ENCODE measurements at regions of chr16 and their contacts with region 1.

Region 1: DNA sequence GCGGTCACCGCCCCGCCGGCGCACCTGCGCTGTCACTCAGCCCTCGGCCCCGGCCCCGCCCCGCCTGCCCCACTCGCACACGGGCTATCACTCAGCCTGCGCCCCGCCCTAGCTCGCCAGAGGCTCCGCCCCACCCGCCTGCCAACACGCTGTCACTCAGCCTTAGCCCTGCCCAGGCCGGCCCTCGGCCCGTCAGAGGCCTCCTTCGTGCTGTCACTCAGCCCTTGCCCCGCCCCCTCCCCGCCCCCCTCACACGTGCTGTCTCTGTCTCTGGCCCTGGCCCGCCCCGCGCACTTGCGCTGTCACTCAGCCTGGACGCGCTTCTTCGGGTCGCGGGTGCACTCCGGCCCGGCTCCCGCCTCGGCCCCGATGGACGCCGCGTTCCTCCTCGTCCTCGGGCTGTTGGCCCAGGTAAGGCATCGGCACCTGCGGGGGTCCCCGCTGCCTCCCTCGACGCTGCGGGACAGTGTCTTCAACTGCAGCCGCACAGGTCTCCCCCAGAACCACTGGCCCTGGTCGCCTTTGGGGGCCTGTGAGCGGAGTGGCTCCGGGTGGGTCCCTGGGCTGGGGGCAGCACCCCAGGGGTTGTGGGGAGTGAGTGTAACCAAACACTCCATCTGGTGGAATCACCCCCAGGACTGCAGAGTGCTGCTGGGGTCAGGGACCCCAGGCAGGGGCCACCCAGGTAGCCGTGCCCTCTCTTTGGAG is at the start of gene CDH15:
- DNase-seq: peak; percentile 97
- H3K4me3 ChIP-seq: peak within 1 kb of the TSS; percentile 34
- H3K27ac ChIP-seq: no peak within 1 kb of the TSS
- H3K4me1 ChIP-seq: peaks cover 25% of the 10 kb centered on the region
- CTCF ChIP-seq: no peak
- total RNA-seq, gene CDH15: not detected in 2 replicates

Region 2: DNA sequence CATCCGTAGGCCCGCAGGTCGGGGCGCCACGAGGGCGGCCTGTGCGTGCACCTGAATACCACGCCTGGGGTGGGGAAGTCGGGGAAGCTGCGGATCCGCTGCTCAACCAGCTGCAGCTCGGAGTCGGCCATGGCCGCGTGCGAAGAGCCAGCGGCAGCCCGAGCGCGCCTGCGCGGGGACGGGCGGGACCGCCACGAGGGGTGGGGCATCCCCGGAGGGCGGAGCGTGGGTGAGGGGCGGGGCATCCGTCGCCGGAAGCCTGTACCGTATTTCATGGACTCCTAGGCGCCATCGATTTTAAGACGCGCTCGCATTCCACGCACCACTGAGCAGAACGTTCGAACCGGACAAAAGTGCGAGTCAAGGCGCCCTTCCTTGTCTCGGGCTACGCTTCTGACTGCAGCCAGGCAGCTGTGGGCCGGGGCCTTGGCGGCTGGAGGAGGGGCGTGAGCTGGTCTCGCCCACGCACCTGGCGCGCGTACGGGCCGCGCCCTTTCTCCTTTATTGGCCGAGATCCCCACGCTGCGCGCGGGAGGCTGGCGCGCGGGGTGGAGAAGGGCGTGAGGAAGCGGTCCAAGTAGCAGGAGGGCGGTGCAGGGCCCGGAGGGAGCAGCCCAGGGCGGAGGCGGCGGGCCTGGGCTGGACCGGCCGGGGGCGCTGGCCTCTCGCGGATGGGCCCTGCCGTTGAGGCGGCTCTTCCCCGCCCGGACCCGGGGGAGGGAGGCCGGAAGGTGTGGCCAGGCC is 359.7 kb before region 1 on chr16 and contains the start of gene APRT:
- CTCF ChIA-PET with region 1: interaction called, 3 read pairs
- POLR2A ChIA-PET with region 1: no interaction called
- intact Hi-C with region 1: loop called (anchors 1 kb)
- DNase-seq: peak; percentile 93
- H3K4me3 ChIP-seq: peak within 1 kb of the TSS; percentile 75
- H3K27ac ChIP-seq: peak within 1 kb of the TSS; percentile 76
- H3K4me1 ChIP-seq: peaks cover 24% of the 10 kb centered on the region
- CTCF ChIP-seq: no peak
- total RNA-seq, gene APRT: 168 and 216 TPM in 2 replicates

Region 3: DNA sequence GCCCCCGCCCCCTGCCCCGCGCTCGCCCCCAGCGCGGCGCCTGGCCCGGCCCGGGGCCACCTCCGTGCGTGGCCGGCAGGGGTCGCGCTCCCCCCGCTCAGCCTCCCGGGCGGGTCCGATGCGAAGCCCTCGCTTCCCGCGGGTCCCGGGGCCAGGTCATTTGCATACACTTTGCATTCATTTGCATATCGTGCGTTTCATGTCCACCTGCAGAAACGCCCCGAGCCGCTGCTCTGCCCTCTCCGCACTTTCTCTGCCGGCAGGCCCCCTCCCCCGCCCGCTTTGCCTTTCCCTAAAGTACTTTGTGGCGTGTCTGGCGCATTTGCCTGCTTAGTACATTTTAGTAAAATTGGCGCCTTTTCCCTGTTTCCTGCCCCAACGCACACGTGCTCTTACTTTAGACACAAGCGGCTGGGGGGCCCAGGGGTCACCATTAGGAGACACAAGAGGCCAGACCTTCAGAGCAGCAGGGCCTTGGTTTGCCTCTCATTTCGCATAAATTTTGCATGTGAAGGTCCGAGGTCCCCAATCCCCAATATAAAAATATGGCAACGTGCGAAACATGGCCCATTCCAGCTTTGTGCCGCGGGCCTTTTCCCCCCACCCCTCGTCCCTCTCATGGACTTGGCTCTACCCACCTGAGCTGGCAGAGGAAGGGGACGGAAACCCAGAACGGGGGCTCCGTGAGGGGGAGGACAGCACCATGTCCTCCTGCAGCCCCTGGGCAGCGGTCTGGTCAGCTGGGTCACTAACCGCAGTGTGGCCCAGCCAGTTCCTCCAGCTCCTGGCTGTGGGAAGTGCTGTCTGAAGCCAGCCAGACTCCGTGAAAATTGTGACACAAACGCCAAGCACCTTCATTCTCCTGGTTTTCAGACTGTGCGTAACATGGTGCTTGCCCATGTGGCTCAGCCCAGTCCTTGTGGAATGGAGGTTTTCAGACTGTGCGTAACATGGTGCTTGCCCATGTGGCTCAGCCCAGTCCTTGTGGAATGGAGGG is 229.4 kb before region 1 on chr16:
- CTCF ChIA-PET with region 1: no interaction called
- POLR2A ChIA-PET with region 1: no interaction called
- intact Hi-C with region 1: loop called (anchors 1 kb)
- DNase-seq: peak; percentile 84
- H3K4me3 ChIP-seq: peak overlapping the region; percentile 47
- H3K27ac ChIP-seq: peak overlapping the region; percentile 2
- H3K4me1 ChIP-seq: peaks cover 49% of the 10 kb centered on the region
- CTCF ChIP-seq: peak; percentile 63

Region 4: DNA sequence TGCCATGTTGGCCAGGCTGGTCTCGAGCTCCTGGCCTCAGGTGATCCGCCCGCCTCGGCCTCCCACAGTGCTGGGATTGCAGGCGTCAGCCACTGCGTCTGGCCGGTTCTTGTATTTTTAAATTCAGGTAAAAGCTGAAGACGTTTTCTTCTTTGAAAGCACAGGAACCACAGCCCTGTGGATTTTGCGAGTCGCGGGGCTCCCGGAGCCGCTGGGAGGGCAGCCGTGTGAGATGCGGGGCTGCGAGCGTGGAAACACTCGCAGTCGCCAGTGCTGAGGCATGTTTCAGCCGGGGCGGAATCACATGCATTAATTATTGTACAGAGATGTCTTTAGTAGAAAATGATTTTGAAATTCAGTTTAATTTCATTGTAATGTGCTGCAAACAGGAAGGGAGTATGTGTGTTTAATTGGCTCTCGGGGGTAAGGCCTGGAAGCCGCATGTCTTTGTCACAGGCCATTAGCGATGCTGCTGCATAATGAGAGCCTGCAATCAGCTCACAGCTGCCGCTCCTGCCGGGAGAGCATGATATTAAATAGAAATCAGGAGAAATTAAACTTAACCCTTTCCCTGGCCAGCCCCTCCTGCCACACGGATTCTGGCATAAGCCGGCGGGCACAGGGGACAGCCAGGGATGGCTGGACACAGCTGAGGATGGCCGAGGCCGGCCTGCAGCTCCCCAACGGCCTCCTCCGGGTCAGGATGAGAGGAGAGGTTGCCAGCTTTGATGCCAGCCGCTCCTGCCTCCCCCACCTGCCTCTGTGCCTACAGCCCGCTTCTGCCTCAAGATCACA is 35.4 kb before region 1 on chr16:
- CTCF ChIA-PET with region 1: no interaction called
- POLR2A ChIA-PET with region 1: no interaction called
- intact Hi-C with region 1: no loop called
- DNase-seq: no peak
- H3K4me3 ChIP-seq: no peak overlapping the region
- H3K27ac ChIP-seq: no peak overlapping the region
- H3K4me1 ChIP-seq: no peaks in the 10 kb centered on the region
- CTCF ChIP-seq: no peak

Region 5: GRCh38 chr16:89193021-89193575 is 21.5 kb after region 1 on chr16:
- CTCF ChIA-PET with region 1: interaction called, 8 read pairs
- POLR2A ChIA-PET with region 1: interaction called, 4 read pairs
- intact Hi-C with region 1: loop called (anchors 2 kb)
- DNase-seq: peak; percentile 72
- H3K4me3 ChIP-seq: no peak overlapping the region
- H3K27ac ChIP-seq: no peak overlapping the region
- H3K4me1 ChIP-seq: no peaks in the 10 kb centered on the region
- CTCF ChIP-seq: no peak

Region 6: DNA sequence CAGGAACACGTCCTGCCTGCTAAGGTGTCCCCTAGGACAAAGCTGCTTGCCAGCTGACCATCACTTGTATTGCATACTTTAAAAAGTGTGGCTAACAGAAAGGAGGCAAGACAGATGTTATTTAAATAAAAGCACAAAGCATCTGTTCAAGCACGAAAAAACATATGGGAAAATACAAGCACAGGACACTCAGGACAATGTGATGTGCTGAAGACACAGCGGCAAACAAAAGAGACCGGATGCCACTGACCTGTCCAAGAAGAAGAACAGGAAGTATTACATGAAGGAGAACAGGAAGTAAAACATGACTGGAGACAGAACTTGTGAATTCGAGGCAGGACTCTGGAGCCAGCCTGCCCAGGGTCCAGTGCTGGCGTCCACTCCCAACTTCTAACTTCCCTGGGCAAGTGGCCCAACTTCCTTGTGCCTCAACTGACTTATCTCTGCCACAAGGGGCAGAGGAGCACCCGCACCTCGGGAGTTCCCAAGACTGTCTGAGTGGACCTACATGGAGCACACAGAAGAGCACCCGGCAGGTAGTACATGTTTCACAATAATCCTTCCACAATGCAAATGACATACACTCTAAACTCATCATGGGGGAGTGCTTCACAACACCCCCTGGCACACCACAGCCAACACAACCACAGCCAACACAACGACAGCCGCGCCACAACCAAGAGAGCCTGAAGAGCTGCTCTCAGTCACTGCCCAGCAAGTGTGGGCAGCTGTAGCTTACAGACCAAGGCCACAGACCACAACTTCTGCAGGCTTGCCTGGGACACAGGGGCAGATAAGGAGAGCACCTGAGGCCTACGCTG is 282.1 kb after region 1 on chr16:
- CTCF ChIA-PET with region 1: no interaction called
- POLR2A ChIA-PET with region 1: no interaction called
- intact Hi-C with region 1: no loop called
- DNase-seq: no peak
- H3K4me3 ChIP-seq: no peak overlapping the region
- H3K27ac ChIP-seq: no peak overlapping the region
- H3K4me1 ChIP-seq: peaks cover 57% of the 10 kb centered on the region
- CTCF ChIP-seq: peak; percentile 47

Measured in OCI-LY7 (cell line).